ENCODE measurements at regions of chr6 and their contacts with region 1.

Region 1: DNA sequence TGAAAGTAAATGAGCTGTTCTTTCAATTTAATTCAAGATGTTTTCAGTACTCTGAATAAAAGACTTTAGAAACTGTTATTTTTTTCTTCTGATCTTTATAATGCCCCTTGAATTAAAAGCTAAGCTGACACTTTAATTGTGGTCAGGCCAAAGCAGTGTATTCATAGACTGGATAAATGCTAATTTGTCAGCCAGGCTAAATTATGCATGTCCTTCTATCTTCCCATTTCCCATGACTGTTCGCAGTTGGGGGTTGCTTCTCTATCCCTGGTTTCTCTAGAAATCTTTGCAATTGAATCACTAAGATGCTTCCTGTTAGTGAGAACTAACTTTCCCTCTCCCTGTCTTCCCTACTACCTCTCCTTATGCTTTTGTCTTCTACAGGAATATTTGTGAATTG is 396.2 kb downstream of the RFPL4B start:
- DNase-seq: no peak
- ATAC-seq: no peak
- H3K4me3 ChIP-seq: no peak overlapping the region
- H3K27ac ChIP-seq: no peak overlapping the region
- H3K4me1 ChIP-seq: no peaks in the 10 kb centered on the region
- H3K27me3 ChIP-seq: no peaks in the 10 kb centered on the region
- CTCF ChIP-seq: no peak
- EP300 ChIP-seq: no peak
- POLR2A ChIP-seq: no peak
- RAD21 ChIP-seq: no peak

Region 2: DNA sequence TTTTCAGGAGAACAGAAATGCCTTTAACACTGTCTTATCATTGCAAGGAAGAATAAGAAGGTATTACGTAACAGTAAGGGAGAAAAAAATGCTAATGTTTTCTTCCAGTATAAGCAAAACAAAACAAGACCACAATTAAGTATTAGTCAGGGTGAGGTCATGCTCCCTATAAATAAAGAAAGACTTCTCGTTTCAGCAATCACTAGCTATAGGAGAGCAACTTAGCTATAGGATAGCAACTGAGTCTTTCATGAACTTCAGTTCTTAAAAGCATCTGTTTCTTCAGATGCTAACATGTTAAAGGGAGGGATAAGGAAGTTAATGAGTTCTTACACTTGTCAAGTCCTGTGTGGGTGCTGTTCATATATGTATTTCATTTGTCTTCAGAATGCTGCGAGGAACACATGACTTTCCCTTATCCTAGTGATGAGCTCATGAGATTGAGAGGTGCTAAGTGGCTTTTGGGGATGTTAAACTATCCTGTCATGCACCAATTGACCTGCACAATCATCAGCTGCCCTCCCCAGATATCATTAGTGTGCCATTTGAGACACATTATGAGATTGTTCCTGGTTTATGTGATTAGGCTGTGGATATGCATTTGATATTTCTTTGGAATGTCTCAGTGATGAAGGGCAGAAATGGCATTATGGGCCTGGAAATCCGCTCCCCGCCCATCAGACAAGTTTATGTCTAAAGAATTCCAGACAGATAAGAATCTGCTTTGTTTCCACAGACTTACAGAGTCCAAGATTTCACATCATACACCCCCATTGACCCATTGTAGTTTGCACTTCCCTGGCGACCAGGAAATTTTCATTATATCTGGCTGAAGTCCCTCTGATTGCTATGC is 526.4 kb before region 1 on chr6:
- CTCF ChIA-PET with region 1: no interaction called
- POLR2A ChIA-PET with region 1: no interaction called
- in situ Hi-C with region 1: no loop called
- intact Hi-C with region 1: loop called (anchors 5 kb)
- DNase-seq: no peak
- ATAC-seq: no peak
- H3K4me3 ChIP-seq: no peak overlapping the region
- H3K27ac ChIP-seq: no peak overlapping the region
- H3K4me1 ChIP-seq: peaks cover 12% of the 10 kb centered on the region
- H3K27me3 ChIP-seq: no peaks in the 10 kb centered on the region
- CTCF ChIP-seq: no peak
- EP300 ChIP-seq: no peak
- POLR2A ChIP-seq: no peak
- RAD21 ChIP-seq: no peak

Region 3: GRCh38 chr6:112760831-112761230 is 17.5 kb after region 1 on chr6:
- CTCF ChIA-PET with region 1: no interaction called
- POLR2A ChIA-PET with region 1: no interaction called
- in situ Hi-C with region 1: no loop called
- intact Hi-C with region 1: no loop called
- DNase-seq: no peak
- ATAC-seq: no peak
- H3K4me3 ChIP-seq: no peak overlapping the region
- H3K27ac ChIP-seq: no peak overlapping the region
- H3K4me1 ChIP-seq: no peaks in the 10 kb centered on the region
- H3K27me3 ChIP-seq: no peaks in the 10 kb centered on the region
- CTCF ChIP-seq: no peak
- EP300 ChIP-seq: no peak
- POLR2A ChIP-seq: no peak
- RAD21 ChIP-seq: no peak